ENCODE measurements at regions of chr9 and their contacts with region 1.

Region 1: DNA sequence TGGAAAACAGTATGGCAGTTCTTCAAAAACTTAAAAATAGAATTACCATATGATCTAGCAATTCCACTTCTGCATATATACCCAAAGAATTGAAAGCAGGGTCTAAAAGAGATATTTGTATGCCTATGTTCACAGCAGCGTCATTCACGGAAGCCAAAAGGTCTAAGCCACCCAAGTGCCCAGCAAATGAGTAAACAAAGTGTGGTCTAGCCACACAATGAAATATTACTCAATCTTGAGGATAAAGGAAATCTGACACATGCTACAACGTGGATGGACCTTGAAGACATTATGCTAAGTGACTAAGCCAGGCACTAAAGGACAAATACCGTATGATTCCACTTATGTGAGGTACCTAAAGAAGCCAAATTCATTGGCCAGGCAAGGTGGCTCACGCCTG is 11.1 kb upstream of the MED27 start:
- DNase-seq: no peak
- H3K27ac ChIP-seq: no peak overlapping the region
- CTCF ChIP-seq: no peak

Region 2: DNA sequence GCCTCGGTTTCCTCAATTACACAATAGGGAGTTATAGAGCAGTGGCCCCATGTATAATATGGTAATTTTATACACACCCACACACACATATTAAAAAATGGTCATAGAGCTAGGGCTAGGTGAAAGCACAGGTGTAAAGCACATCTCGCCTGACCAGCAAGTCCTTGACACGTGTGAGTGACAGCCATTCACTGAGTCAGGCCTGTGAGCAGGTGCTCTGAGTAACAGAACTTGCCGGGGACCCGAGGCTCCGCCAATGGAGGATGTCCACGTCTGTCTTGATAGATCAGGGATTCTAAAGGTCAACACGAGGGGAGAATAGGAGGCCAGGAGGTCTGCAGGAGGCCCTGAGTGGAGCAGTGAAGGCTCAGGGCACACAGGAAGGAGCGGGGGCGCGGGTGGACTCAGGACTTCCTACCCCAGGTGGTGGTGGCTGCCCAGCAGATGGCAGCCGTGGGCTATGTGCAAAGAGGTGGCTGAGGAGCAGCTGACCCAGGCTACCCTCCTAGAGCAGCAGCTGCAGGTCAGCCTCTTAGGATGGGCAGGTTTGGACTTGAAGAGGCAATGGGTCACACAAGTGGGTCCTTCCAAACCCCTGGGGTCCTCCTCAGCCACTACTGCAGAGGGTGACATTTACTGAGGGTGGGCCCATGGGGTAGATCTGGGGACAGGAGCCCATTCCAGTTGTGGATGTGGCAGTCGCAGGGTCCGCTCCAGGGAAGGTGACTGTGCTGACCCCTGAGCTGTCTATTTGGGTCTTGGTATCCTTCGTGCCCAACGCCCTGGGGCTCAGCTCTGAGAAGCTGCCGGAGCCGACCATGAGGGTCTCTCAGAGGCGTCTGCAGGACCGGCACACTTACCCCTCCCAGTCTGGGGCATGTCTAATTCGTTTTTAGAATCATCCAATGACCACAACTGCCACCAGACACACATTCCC is 499.6 kb before region 1 on chr9:
- CTCF ChIA-PET with region 1: no interaction called
- POLR2A ChIA-PET with region 1: no interaction called
- DNase-seq: peak; percentile 92
- H3K27ac ChIP-seq: peak overlapping the region; percentile 62
- CTCF ChIP-seq: peak; percentile 99

Region 3: DNA sequence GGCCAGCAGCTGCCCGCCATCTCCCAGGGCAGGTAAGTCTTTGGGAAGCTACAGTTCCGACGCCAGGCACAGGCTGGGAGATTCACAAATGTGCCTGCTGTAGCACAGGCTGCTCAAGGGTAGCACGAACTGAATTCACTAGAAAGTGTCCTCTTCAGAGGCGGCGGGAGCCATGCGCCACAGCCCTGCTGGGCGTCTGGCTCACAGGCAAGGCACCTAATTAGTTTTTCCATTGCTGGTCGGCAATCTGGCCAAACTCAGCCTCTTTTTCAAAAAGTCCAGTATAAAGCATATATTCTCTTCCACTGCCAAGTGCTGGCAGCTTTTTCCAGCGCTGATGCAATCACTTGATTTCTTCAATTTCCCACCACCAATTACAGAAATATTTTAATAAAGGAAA is 222.0 kb before region 1 on chr9:
- CTCF ChIA-PET with region 1: no interaction called
- POLR2A ChIA-PET with region 1: no interaction called
- DNase-seq: no peak
- H3K27ac ChIP-seq: no peak overlapping the region
- CTCF ChIP-seq: no peak

Region 4: GRCh38 chr9:131977109-131977838 is 113.5 kb before region 1 on chr9:
- CTCF ChIA-PET with region 1: no interaction called
- POLR2A ChIA-PET with region 1: interaction called, 14 read pairs
- DNase-seq: no peak
- H3K27ac ChIP-seq: no peak overlapping the region
- CTCF ChIP-seq: no peak

Region 5: DNA sequence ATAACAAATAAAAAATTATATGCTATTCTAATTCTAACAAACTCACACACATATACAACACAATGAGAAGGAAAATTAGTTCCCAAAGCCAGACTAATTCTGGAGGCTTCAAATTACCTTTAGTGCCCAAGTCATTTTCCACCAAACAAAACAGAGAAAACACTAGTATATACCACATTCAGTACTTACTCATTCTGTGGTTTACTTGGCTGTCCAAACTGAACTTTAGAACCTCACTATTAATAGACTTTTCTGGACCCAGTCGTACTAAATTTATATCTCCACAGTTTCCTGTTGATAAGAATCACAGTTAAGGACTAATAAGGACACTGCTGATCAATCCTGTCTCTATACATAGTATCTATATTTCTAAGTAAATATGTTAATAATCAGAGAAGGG is 197.6 kb after region 1 on chr9:
- CTCF ChIA-PET with region 1: no interaction called
- POLR2A ChIA-PET with region 1: no interaction called
- DNase-seq: no peak
- H3K27ac ChIP-seq: no peak overlapping the region
- CTCF ChIP-seq: no peak